Endothelial cell of umbilical vein (primary cell): ENCODE measurements at regions of chr3 and their contacts with region 1.

Region 1: DNA sequence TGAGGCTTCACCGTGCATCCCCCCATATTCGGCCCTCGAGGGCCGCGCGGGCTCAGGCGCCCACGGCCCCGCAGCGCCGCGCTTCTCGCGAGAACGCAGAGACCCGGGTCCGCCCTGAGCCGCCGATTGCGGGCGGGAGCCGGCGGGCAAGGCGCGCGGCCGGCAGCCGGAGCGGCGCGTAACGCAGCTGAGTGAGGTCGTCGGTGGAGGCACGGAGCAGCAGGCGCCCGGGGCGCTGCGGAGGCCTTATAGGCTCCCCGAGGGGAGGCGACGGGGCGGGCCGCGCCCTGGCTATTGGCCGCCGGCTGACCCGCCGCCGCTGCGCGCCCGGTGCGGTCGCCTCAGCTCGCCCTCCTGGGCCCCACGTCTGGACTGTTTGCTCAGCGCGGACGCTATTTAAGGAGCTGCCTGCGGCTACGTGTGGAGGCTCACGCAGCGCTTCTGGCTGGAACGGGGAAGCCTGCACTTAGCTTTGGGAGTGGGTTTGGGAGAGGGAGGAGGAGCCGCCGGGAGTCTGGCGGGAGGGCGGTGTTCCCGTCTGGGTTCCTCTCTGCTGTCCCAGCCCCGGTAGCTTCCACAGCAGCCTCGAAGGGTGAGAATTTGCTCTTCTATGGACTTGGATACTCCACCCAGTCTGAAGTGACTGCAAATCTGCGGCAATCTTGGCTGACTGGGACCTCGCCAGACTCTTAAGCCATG is at the start of gene PLOD2:
- DNase-seq: peak; percentile 90
- H3K4me3 ChIP-seq: peak within 1 kb of the TSS; percentile 55 to 94 (median 80)
- H3K27ac ChIP-seq: peak within 1 kb of the TSS; percentile 90
- H3K4me1 ChIP-seq: peaks cover 72% of the 10 kb centered on the region
- H3K27me3 ChIP-seq: no peaks in the 10 kb centered on the region
- CTCF ChIP-seq: no peak
- POLR2A ChIP-seq: peak; percentile 98
- total RNA-seq, gene PLOD2: 193 and 228 TPM in 2 replicates

Region 2: DNA sequence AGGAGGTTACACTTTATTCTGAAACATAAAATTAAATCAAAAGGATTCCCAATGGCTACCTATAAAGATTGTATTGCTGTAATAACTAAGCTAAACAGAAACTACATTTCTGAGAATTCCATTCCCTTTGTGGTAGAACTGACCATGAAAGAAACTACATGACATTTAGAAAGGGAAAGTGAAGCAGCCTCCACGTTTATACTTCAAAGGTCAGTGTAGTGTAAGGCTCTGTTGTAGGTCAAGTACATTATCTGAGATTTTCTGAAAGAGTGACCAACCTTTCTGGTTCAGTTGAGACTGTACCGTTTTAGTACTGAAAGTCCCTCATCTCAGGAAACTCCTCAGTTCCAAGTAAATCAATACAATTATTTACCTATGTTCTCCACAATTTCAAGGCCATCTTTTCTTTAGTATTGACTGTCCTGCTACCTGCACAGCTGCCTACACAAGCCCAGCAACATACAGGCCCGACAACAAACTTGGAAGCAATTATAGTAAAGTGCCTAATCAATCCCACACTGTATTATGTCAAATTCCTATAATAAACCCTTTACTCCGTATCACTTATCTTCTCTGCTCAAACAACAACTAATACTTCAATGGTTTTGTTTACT is 343.1 kb before region 1 on chr3:
- CTCF ChIA-PET with region 1: no interaction called
- POLR2A ChIA-PET with region 1: no interaction called
- dilution Hi-C with region 1: no loop called
- intact Hi-C with region 1: no loop called
- DNase-seq: no peak
- H3K4me3 ChIP-seq: no peak overlapping the region
- H3K27ac ChIP-seq: no peak overlapping the region
- H3K4me1 ChIP-seq: no peaks in the 10 kb centered on the region
- H3K27me3 ChIP-seq: no peaks in the 10 kb centered on the region
- CTCF ChIP-seq: no peak
- POLR2A ChIP-seq: no peak

Region 3: GRCh38 chr3:145971186-145971585 is 189.9 kb before region 1 on chr3:
- CTCF ChIA-PET with region 1: no interaction called
- POLR2A ChIA-PET with region 1: no interaction called
- dilution Hi-C with region 1: no loop called
- intact Hi-C with region 1: no loop called
- DNase-seq: no peak
- H3K4me3 ChIP-seq: no peak overlapping the region
- H3K27ac ChIP-seq: no peak overlapping the region
- H3K4me1 ChIP-seq: no peaks in the 10 kb centered on the region
- H3K27me3 ChIP-seq: no peaks in the 10 kb centered on the region
- CTCF ChIP-seq: no peak
- POLR2A ChIP-seq: no peak

Region 4: DNA sequence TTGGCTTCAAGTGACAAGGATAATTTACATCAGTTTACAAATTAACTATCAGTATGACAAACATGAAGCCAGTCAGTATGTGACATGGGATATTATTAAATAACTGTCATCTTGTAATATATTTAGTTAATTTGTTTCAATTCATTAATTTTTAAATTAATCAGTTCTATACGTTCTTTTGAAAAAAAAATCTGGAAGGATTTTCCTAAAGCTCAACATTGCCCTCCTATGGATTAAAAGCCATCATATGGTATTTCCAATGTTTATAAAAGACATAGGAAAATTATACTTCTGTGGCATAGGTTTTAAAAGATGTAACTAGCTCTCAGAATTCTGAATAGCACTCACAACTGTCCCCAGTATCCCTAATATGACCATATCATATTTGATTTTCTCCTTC is 134.6 kb before region 1 on chr3:
- CTCF ChIA-PET with region 1: no interaction called
- POLR2A ChIA-PET with region 1: no interaction called
- dilution Hi-C with region 1: no loop called
- intact Hi-C with region 1: no loop called
- DNase-seq: no peak
- H3K4me3 ChIP-seq: no peak overlapping the region
- H3K27ac ChIP-seq: no peak overlapping the region
- H3K4me1 ChIP-seq: no peaks in the 10 kb centered on the region
- H3K27me3 ChIP-seq: no peaks in the 10 kb centered on the region
- CTCF ChIP-seq: no peak
- POLR2A ChIP-seq: no peak

Region 5: GRCh38 chr3:146100825-146101444 is 60.2 kb before region 1 on chr3:
- CTCF ChIA-PET with region 1: interaction called, 3 read pairs
- POLR2A ChIA-PET with region 1: interaction called, 6 read pairs
- dilution Hi-C with region 1: no loop called
- intact Hi-C with region 1: loop called (anchors 2 kb)
- DNase-seq: peak; percentile 80
- H3K4me3 ChIP-seq: peak overlapping the region in 1 of 3 experiments; percentile 14
- H3K27ac ChIP-seq: peak overlapping the region; percentile 89
- H3K4me1 ChIP-seq: peaks cover 33% of the 10 kb centered on the region
- H3K27me3 ChIP-seq: no peaks in the 10 kb centered on the region
- CTCF ChIP-seq: no peak
- POLR2A ChIP-seq: no peak

Region 6: GRCh38 chr3:146177519-146177918 is 16.4 kb after region 1 on chr3:
- CTCF ChIA-PET with region 1: interaction called, 25 read pairs
- POLR2A ChIA-PET with region 1: interaction called, 42 read pairs
- dilution Hi-C with region 1: no loop called
- intact Hi-C with region 1: loop called (anchors 1 kb)
- DNase-seq: no peak
- H3K4me3 ChIP-seq: peak overlapping the region in 1 of 3 experiments; percentile 26
- H3K27ac ChIP-seq: peak overlapping the region; percentile 99
- H3K4me1 ChIP-seq: peaks cover 37% of the 10 kb centered on the region
- H3K27me3 ChIP-seq: no peaks in the 10 kb centered on the region
- CTCF ChIP-seq: no peak
- POLR2A ChIP-seq: no peak

Region 7: DNA sequence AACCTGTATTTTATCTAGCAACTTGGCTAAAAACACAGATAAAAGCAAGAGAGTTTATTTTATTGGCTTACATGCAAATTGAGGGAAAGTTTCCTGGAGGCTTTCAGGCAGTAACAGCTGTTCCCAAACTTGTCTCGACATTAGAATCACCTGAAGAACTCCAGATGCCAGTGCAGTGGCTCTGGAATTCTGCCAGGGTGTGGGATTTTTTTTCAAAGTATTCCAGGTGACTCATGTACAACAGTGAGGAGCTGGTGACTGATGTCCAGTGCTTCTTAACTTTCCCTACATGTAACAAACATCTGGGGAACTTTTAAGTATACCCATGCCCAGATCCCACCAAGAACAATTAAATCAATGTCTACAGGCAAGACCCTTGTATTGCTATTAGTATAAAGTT is 23.5 kb after region 1 on chr3:
- CTCF ChIA-PET with region 1: interaction called, 115 read pairs
- POLR2A ChIA-PET with region 1: interaction called, 20 read pairs
- dilution Hi-C with region 1: no loop called
- intact Hi-C with region 1: loop called (anchors 2 kb)
- DNase-seq: no peak
- H3K4me3 ChIP-seq: no peak overlapping the region
- H3K27ac ChIP-seq: no peak overlapping the region
- H3K4me1 ChIP-seq: peaks cover 9% of the 10 kb centered on the region
- H3K27me3 ChIP-seq: no peaks in the 10 kb centered on the region
- CTCF ChIP-seq: no peak
- POLR2A ChIP-seq: no peak

Region 8: DNA sequence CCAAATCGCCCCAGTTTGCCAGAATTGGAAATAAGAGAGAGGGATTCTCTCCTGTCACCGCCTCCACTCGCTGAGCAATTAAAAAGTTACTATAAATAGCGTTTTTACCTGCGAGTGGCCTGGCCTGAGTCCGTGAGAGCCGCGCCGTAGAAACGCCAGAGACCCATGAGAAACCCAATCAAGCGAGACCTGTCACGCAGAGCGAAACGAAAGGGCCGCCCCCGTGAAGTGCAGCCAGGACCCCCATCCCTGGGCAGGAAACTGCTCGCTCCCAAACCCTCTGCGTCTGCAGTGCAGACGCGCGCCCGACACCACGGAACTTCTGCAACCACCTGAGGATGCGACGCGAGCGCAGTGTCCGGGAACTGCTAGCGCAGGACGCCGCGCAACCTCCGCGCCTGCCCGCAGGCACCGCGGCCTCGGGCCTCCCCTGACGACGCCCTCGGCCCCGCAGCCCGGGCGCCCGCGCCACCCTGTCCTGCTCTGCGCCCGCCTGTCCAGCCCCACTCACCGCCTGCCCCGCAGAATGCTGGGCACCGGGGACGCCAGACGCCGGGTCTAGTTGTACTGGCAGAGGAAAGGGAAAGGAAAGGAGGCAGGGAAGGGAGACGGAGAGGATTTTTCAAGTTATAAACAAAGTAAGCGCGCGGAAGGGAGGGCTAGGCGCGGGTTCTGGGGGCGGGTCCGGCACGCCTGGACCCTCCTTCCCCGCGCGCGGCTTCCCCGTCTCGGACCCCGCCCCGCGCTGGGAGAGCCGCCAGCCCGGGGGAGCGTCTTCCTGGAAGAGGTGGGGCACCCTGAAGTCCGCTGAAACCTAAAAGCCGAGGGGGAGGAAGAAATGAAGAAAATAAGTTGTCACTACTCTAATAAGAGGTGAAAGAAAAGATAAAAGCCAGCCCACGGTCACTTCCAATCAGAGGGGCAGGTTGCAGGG is 89.6 kb after region 1 on chr3 and contains the start of gene PLSCR4:
- CTCF ChIA-PET with region 1: no interaction called
- POLR2A ChIA-PET with region 1: no interaction called
- dilution Hi-C with region 1: no loop called
- intact Hi-C with region 1: loop called (anchors 1 kb)
- DNase-seq: peak; percentile 93
- H3K4me3 ChIP-seq: peak within 1 kb of the TSS; percentile 94 to 97 (median 96)
- H3K27ac ChIP-seq: peak within 1 kb of the TSS; percentile 77
- H3K4me1 ChIP-seq: peaks cover 36% of the 10 kb centered on the region
- H3K27me3 ChIP-seq: no peaks in the 10 kb centered on the region
- CTCF ChIP-seq: no peak
- POLR2A ChIP-seq: peak; percentile 35
- total RNA-seq, gene PLSCR4: 81.5 and 91.8 TPM in 2 replicates

Region 9: DNA sequence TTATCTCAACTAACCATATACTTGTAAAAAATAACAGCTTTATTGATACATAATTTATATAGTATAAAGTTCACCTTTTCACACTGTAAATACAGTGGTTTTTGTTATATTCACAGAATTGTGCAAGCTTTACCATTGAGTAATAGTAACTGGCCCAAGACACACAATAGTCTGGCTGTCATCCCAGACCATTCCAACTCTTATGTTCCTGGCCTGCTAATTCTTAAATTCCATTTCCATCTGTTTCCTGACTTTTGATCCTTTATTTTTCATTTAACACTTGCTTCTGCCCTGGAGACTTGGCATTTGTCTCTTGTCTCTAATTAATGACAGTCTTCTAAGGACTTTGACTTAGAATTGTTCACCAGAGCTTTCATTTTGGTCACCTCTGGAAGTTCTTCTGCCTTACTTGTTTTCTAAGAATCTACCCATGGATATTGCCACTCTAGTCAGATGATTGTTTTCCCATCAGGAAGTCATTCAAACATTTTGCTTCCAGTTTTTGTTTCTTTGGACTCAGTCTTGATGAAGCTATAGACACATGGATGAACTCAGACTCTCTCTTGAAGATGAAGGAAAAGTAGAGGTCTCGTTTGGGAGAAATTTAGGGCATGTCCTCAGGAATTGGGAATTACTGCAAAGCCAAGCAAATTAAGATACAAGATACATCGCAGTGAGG is 117.0 kb after region 1 on chr3:
- CTCF ChIA-PET with region 1: no interaction called
- POLR2A ChIA-PET with region 1: no interaction called
- dilution Hi-C with region 1: no loop called
- intact Hi-C with region 1: loop called (anchors 1 kb)
- DNase-seq: peak; percentile 97
- H3K4me3 ChIP-seq: no peak overlapping the region
- H3K27ac ChIP-seq: peak overlapping the region; percentile 89
- H3K4me1 ChIP-seq: peaks cover 57% of the 10 kb centered on the region
- H3K27me3 ChIP-seq: no peaks in the 10 kb centered on the region
- CTCF ChIP-seq: no peak
- POLR2A ChIP-seq: peak; percentile 66

Region 10: DNA sequence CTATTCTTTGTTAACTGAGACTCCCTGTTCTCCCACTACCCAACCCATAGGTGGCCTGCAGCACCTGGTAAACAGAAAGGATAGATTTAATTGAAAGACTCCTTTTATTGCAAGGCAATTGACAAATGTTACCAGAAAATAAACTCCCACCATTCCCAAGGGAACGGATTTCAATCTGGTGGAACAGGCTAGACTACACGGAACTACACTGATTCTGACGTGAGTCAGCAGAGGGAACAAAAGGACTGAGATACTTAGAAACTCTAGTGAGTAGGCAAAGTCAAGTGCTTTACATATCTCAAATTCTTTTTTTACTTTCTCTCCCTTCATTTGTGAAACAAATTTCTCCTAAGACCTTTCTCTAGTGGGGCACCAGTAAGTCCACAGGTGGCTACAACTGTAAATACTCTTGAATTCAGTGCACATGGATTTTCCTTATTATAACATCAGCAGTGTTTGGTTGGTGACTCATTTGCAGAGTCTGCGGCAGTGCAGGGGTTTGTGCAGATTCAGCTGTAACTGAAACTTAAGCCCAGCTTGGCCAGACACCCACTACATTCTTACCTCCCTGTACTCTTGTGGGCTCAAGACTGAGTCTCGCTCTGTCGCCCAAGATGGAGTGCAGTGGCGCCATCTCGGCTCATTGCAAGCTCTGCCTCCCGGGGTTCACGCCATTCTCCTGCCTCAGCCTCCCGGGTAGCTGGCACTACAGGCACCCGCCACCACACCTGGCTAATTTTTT is 342.5 kb after region 1 on chr3:
- CTCF ChIA-PET with region 1: no interaction called
- POLR2A ChIA-PET with region 1: no interaction called
- dilution Hi-C with region 1: no loop called
- intact Hi-C with region 1: loop called (anchors 1 kb)
- DNase-seq: peak; percentile 45
- H3K4me3 ChIP-seq: no peak overlapping the region
- H3K27ac ChIP-seq: no peak overlapping the region
- H3K4me1 ChIP-seq: peaks cover 35% of the 10 kb centered on the region
- H3K27me3 ChIP-seq: no peaks in the 10 kb centered on the region
- CTCF ChIP-seq: no peak
- POLR2A ChIP-seq: no peak

Region 11: DNA sequence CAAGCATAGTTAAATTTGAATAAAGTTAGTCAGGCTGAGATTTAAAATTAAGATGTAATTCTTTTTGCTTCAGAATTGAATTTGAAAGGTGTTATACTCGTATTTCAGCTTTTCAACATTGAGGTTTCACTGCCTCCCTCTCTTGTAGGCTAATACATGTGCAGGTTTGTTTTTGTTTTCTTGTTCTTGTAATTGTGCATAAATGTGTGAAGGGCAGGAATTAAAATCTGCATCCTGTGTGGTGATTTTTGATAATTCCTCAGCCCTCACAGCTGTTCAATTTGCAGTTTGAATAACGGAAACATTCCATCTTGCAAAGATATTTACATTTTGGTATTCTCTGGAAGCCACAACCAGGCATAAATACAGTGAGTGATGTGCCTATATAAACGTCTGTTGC is 408.2 kb after region 1 on chr3:
- CTCF ChIA-PET with region 1: no interaction called
- POLR2A ChIA-PET with region 1: no interaction called
- dilution Hi-C with region 1: no loop called
- intact Hi-C with region 1: no loop called
- DNase-seq: no peak
- H3K4me3 ChIP-seq: no peak overlapping the region
- H3K27ac ChIP-seq: no peak overlapping the region
- H3K4me1 ChIP-seq: no peaks in the 10 kb centered on the region
- H3K27me3 ChIP-seq: no peaks in the 10 kb centered on the region
- CTCF ChIP-seq: no peak
- POLR2A ChIP-seq: no peak